Pancreas (tissue), 10 donors: ENCODE measurements at regions of chr2 and their contacts with region 1.

Region 1: GRCh38 chr2:72892506-72893173 is 5.4 kb downstream of the SPR start:
- DNase-seq: peak; percentile 64 to 92 (median 81)
- ATAC-seq: peak; percentile 69 to 89 (median 81)
- H3K4me3 ChIP-seq: no peak overlapping the region
- H3K27ac ChIP-seq: no peak overlapping the region
- H3K4me1 ChIP-seq: peaks cover 7 to 18% (median 10%) of the 10 kb centered on the region in 3 donors
- H3K27me3 ChIP-seq: no peaks in the 10 kb centered on the region
- CTCF ChIP-seq: peak; percentile 45 to 70 (median 70)

Region 2: DNA sequence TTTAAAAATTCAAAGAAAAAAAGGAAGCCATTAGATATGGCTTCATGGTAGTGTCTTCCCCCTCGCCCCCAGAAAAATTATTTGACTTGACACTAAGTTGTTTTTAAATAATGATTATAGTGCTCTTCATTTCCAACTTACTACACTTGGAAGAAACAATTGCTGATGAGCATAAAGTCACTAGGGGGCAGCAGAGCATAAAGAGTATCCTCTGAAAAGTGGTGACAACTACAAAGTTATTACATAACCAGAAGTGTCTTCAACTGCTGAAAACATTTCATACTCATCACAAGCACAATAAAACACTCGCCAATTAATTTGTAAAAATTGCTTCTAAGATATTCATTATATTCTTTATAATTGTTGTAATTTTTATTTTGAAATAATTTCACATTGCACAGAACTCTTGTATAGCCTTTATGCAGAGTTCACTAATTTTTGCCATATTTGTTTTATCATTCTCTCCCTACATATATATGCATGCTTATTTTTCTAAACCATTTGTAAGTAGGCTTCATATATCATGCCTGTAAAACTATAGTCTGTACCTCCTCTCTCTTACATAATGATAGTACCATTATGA is 121.7 kb before region 1 on chr2:
- intact Hi-C with region 1: no loop called
- DNase-seq: peak in 3 of 6 donors; percentile 47 to 61 (median 48)
- ATAC-seq: peak in 3 of 4 donors; percentile 81 to 92 (median 84)
- H3K4me3 ChIP-seq: no peak overlapping the region
- H3K27ac ChIP-seq: no peak overlapping the region
- H3K4me1 ChIP-seq: no peaks in the 10 kb centered on the region
- H3K27me3 ChIP-seq: no peaks in the 10 kb centered on the region
- CTCF ChIP-seq: peak; percentile 52 to 72 (median 69)

Region 3: DNA sequence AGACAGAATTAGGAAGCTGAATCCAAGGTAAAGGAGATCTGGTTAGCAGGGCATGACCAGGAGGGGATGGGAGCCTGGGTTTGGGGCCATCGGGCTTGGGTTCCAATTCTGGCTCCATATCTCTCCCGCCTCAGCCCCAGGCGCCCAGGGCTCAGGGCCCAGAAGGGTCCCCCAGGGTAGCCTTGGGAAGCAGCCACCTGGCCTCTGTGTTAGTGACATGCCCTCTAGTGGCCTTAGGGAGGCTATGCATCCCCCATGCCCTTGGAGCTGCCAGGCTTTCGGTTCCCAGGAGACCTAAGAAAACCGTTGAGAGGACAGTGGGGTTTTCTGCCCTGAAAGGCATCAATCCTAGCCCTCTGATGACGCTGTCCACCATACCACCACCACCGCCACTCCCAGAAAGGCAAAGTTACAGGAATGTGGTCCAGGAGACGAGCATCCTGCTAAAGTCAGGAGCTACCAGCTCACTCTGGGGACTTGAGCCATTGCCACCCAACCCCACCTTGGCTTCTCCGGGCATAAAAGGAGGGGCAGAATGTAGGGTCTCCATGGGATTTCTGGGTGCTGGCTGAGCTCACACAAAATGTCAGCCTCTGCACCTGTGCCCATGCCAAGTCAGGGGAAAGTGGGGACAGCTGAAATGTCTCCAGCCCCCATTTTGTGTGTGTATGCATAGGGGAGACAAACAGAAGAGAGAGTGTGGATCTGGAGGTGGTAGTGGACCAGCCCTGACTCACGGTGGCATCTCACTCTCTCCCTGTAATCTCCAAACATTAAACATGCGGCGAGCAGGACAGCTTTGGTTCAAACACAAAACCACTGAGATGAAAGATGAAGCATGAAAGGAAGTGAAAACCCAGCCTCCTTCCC is 81.2 kb after region 1 on chr2:
- intact Hi-C with region 1: loop called in 1 of 3 experiments (anchors 5 kb)
- DNase-seq: peak in 4 of 6 donors; percentile 43 to 67 (median 65)
- ATAC-seq: peak; percentile 79 to 99 (median 96)
- H3K4me3 ChIP-seq: no peak overlapping the region
- H3K27ac ChIP-seq: no peak overlapping the region
- H3K4me1 ChIP-seq: no peaks in the 10 kb centered on the region
- H3K27me3 ChIP-seq: no peaks in the 10 kb centered on the region
- CTCF ChIP-seq: peak; percentile 70 to 81 (median 75)

Region 4: GRCh38 chr2:73176881-73177644 is 284.4 kb after region 1 on chr2:
- intact Hi-C with region 1: loop called in 1 of 3 experiments (anchors 5 kb)
- DNase-seq: peak; percentile 79 to 97 (median 88)
- ATAC-seq: peak; percentile 91 to 97 (median 94)
- H3K4me3 ChIP-seq: peak overlapping the region; percentile 18 to 61 (median 48)
- H3K27ac ChIP-seq: peak overlapping the region in 2 of 4 donors; percentile 55 to 58
- H3K4me1 ChIP-seq: peaks cover 0 to 16% (median 4%) of the 10 kb centered on the region in 3 donors
- H3K27me3 ChIP-seq: no peaks in the 10 kb centered on the region
- CTCF ChIP-seq: peak; percentile 89 to 97 (median 96)